GM13977 (cell line): ENCODE measurements at regions of chr19 and their contacts with region 1.

Region 1: DNA sequence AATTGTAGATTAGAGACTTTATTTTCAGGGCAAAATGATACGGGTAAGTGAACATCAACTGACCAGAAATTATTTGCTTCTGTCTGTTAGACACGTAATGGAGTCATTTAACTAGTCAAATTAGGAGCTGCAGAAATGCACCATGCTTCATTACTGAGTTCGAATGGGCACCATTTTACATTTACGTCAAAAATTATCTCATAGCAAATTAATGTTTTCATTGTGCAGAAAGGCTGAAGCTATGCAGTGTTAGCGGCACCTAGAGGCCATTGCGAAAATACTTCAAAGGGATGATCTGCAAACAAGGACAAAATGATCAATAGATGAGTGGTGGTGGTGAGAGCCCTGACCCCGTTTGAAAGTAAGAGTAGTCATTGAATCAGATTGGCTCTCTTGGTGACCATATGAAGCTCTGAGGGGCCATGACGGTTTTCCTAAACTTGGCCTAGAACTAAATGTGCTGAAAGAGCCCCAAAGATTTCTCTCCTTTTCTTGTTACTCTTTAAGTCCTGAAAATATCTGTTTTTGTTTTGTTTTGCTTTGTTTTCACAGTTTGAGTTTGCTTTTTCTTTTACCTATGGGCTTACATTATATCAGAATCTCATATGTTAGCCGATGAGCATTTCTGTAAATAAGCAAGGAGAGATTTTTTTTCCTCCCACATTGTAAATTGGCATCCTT is 277.9 kb downstream of the ZNF536 start:
- DNase-seq: peak; percentile 75
- CTCF ChIP-seq: peak; percentile 76

Region 2: GRCh38 chr19:29745253-29745652 is 904.8 kb before region 1 on chr19:
- in situ Hi-C with region 1: loop called (anchors 25 kb)
- DNase-seq: no peak
- CTCF ChIP-seq: no peak